Lower lobe of right lung (tissue), 2 donors: ENCODE measurements at regions of chr4 and their contacts with region 1.

Region 1: DNA sequence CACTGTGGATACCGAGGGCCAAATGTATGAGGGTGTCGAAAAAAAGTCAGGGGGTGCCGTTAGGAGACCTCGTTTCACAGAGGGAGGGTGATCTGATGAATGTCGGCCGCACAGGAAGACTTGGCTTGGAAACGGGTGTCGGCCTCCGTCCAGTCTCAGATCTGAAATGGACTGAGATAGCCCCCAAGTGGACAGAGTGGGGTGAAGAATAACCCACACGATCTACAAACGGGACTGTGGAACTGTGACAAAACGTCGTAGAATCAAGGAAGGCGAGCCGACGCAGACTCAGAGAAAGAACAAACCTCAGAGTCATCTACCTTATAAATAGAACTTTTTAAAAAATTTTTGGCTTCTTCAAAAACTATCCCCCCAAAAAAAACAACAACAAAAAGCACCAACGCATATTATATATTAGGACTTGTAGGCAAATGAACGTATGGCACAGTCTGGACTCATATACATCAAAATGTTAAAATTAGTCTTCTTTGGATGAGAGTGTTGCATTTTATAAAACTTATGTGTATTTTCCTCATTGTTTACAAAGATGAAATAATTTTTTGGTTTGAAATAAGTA is 63.8 kb upstream of the IRF2 start:
- DNase-seq: peak; percentile 89
- ATAC-seq: peak; percentile 94 to 95
- H3K4me3 ChIP-seq: peak overlapping the region; percentile 70
- H3K27ac ChIP-seq: peak overlapping the region; percentile 96
- H3K4me1 ChIP-seq: peaks cover 30% of the 10 kb centered on the region
- H3K27me3 ChIP-seq: no peaks in the 10 kb centered on the region
- CTCF ChIP-seq: peak; percentile 62

Region 2: GRCh38 chr4:184215709-184216328 is 322.3 kb before region 1 on chr4:
- intact Hi-C with region 1: no loop called
- DNase-seq: no peak
- ATAC-seq: no peak
- H3K4me3 ChIP-seq: no peak overlapping the region
- H3K27ac ChIP-seq: no peak overlapping the region
- H3K4me1 ChIP-seq: no peaks in the 10 kb centered on the region
- H3K27me3 ChIP-seq: no peaks in the 10 kb centered on the region
- CTCF ChIP-seq: no peak

Region 3: GRCh38 chr4:184263910-184264732 is 274.0 kb before region 1 on chr4:
- intact Hi-C with region 1: loop called (anchors 5 kb)
- DNase-seq: peak; percentile 95
- ATAC-seq: peak; percentile 88 to 89
- H3K4me3 ChIP-seq: no peak overlapping the region
- H3K27ac ChIP-seq: no peak overlapping the region
- H3K4me1 ChIP-seq: peaks cover 23% of the 10 kb centered on the region
- H3K27me3 ChIP-seq: no peaks in the 10 kb centered on the region
- CTCF ChIP-seq: peak; percentile 90

Region 4: GRCh38 chr4:184479516-184479950 is 58.6 kb before region 1 on chr4:
- intact Hi-C with region 1: no loop called
- DNase-seq: no peak
- ATAC-seq: no peak
- H3K4me3 ChIP-seq: no peak overlapping the region
- H3K27ac ChIP-seq: no peak overlapping the region
- H3K4me1 ChIP-seq: peaks cover 33% of the 10 kb centered on the region
- H3K27me3 ChIP-seq: no peaks in the 10 kb centered on the region
- CTCF ChIP-seq: no peak